ENCODE measurements at regions of chr7 and their contacts with region 1.

Region 1: GRCh38 chr7:94509879-94510581 is 421 bp downstream of the CASD1 start:
- DNase-seq: peak; percentile 66
- H3K4me3 Mint-ChIP-seq: peak overlapping the region; percentile 78
- H3K27ac Mint-ChIP-seq: peak overlapping the region; percentile 83
- H3K4me1 Mint-ChIP-seq: peaks cover 41% of the 10 kb centered on the region
- H3K27me3 Mint-ChIP-seq: no peaks in the 10 kb centered on the region

Region 2: DNA sequence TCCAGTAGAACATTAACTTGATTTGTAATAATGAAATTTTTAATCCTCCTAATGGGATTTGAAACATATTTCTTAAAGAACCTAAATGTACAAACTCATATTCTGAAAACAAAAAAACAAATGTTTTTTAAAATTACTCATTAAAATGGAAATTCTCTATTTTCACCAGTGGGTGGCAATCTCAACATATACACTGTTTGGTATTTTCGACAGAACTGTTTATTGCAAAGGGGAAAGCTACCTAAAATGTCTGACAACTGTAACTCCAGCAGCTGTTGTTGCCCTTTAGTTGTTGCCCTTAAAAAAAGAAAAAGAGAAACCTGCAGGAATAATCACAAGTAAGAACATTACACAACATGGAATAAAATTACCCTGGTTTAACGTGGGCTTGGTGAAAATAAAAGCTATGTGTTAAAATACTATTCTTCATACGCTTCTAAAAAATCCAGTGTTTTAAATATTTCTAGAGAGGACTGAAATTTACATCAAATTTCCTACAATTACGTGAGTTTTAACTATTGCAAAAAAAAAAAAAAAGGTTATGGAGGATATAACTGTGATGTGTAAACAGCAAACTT is 60.8 kb before region 1 on chr7:
- CTCF ChIA-PET with region 1: interaction called, 3 read pairs
- intact Hi-C with region 1: loop called (anchors 2 kb)
- DNase-seq: no peak
- H3K4me3 Mint-ChIP-seq: no peak overlapping the region
- H3K27ac Mint-ChIP-seq: no peak overlapping the region
- H3K4me1 Mint-ChIP-seq: no peaks in the 10 kb centered on the region
- H3K27me3 Mint-ChIP-seq: peaks cover 12% of the 10 kb centered on the region

Region 3: GRCh38 chr7:94580596-94580995 is 70.6 kb after region 1 on chr7:
- CTCF ChIA-PET with region 1: no interaction called
- intact Hi-C with region 1: no loop called
- DNase-seq: no peak
- H3K4me3 Mint-ChIP-seq: no peak overlapping the region
- H3K27ac Mint-ChIP-seq: no peak overlapping the region
- H3K4me1 Mint-ChIP-seq: no peaks in the 10 kb centered on the region
- H3K27me3 Mint-ChIP-seq: no peaks in the 10 kb centered on the region

Region 4: GRCh38 chr7:94620703-94621118 is 110.7 kb after region 1 on chr7:
- CTCF ChIA-PET with region 1: no interaction called
- intact Hi-C with region 1: loop called (anchors 1 kb)
- DNase-seq: peak; percentile 72
- H3K4me3 Mint-ChIP-seq: no peak overlapping the region
- H3K27ac Mint-ChIP-seq: no peak overlapping the region
- H3K4me1 Mint-ChIP-seq: peaks cover 11% of the 10 kb centered on the region
- H3K27me3 Mint-ChIP-seq: peaks cover 5% of the 10 kb centered on the region

Region 5: DNA sequence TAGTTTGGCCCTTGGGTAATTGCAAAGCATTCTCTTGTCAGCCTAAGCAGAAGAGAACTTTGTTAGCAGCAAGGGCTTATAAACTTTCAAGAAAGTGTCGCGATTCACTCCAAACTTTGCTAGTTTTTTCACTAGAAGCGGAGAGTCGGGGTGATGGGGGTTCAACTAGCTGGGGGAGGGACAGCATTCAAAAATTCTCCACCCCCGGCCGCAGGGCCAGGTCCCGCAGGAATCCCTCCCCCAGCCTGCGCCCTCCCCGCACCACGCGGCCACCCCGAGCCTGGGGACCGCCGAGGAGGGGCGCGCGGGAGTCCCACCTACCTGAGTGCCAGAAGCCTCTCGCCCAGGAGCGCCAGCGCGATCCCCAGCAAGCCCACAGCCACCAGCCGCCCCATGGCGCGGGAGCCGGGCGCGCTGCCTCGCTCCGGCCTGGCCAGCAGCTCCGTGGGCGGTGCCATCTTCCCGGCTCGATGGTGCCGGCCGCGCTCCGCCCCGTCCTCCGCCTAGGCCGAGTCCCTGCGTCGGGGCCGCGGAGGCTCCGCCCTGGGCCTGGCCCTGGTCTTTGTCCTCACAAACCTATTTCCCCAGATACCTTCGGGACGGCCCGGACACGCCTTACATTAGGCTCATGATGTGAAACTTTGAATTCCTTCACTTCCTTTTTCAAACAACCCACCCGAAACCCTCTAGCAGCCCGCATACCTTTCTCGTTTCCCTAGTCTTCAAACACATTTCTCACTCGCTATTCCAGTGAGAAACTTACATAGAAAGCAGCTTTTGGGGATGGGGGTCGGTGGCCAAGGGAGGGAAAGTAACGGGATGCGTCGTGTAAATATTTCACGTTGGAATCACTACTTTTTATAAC is 924.8 kb after region 1 on chr7 and contains the start of gene PON2:
- CTCF ChIA-PET with region 1: no interaction called
- intact Hi-C with region 1: loop called (anchors 5 kb)
- DNase-seq: peak; percentile 38
- H3K4me3 Mint-ChIP-seq: peak within 1 kb of the TSS; percentile 69
- H3K27ac Mint-ChIP-seq: no peak within 1 kb of the TSS
- H3K4me1 Mint-ChIP-seq: peaks cover 6% of the 10 kb centered on the region
- H3K27me3 Mint-ChIP-seq: peaks cover 7% of the 10 kb centered on the region
- total RNA-seq, gene PON2: 3.8 to 3.9 TPM

Measured in activated naive CD4-positive, alpha-beta T cell treated with anti-CD3 and anti-CD28 coated beads for 36 hours (primary cell).